Activated naive CD4-positive, alpha-beta T cell treated with anti-CD3 and anti-CD28 coated beads for 36 hours (primary cell): ENCODE measurements at regions of chr3 and their contacts with region 1.

Region 1: GRCh38 chr3:192331749-192332385 is 395.5 kb downstream of the FGF12 start:
- DNase-seq: no peak
- H3K4me3 Mint-ChIP-seq: peak overlapping the region; percentile 9
- H3K27ac Mint-ChIP-seq: no peak overlapping the region
- H3K4me1 Mint-ChIP-seq: peaks cover 20% of the 10 kb centered on the region
- H3K27me3 Mint-ChIP-seq: no peaks in the 10 kb centered on the region

Region 2: GRCh38 chr3:192130534-192131132 is 201.2 kb before region 1 on chr3:
- CTCF ChIA-PET with region 1: no interaction called
- intact Hi-C with region 1: no loop called
- DNase-seq: peak; percentile 26
- H3K4me3 Mint-ChIP-seq: no peak overlapping the region
- H3K27ac Mint-ChIP-seq: no peak overlapping the region
- H3K4me1 Mint-ChIP-seq: no peaks in the 10 kb centered on the region
- H3K27me3 Mint-ChIP-seq: no peaks in the 10 kb centered on the region

Region 3: GRCh38 chr3:192188218-192188835 is 143.5 kb before region 1 on chr3:
- CTCF ChIA-PET with region 1: no interaction called
- intact Hi-C with region 1: loop called (anchors 5 kb)
- DNase-seq: peak; percentile 59
- H3K4me3 Mint-ChIP-seq: no peak overlapping the region
- H3K27ac Mint-ChIP-seq: no peak overlapping the region
- H3K4me1 Mint-ChIP-seq: peaks cover 5% of the 10 kb centered on the region
- H3K27me3 Mint-ChIP-seq: no peaks in the 10 kb centered on the region